ENCODE measurements at regions of chr22 and their contacts with region 1.

Region 1: GRCh38 chr22:42830166-42830565 is 26.9 kb downstream of the ARFGAP3 start:
- DNase-seq: no peak
- H3K4me3 ChIP-seq: no peak overlapping the region
- H3K27ac ChIP-seq: no peak overlapping the region
- H3K4me1 ChIP-seq: peaks cover 3% of the 10 kb centered on the region
- H3K27me3 ChIP-seq: no peaks in the 10 kb centered on the region
- CTCF ChIP-seq: no peak

Region 2: DNA sequence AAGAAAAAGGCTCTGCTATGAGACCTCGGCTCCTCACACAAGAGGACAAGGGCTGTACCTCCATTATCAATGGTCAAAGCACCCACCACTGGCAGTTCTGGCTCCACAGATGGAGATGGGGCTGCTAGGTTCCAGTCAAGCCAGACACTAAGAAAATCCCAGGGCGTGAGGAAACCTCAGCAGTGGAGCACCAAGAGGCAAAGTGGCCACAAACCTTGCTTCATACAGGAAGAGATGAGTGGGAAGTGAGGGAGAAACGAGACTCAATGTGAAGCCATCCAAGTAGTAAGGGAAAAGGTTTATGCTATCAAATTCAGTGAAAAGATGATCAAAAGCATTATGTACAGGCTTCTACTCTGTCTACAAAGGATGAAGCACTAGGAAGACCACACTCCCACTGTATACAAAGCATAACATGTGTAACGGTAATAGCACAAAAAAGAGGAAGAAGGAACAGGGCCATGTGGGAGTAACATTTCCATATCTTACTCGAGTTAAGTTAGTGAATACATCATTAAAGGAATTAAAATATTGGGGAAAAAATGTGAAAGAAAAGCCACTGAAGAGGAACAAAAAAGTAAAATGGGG is 242.5 kb before region 1 on chr22:
- CTCF ChIA-PET with region 1: no interaction called
- dilution Hi-C with region 1: no loop called
- in situ Hi-C with region 1: no loop called
- intact Hi-C with region 1: no loop called
- DNase-seq: no peak
- H3K4me3 ChIP-seq: no peak overlapping the region
- H3K27ac ChIP-seq: no peak overlapping the region
- H3K4me1 ChIP-seq: no peaks in the 10 kb centered on the region
- H3K27me3 ChIP-seq: no peaks in the 10 kb centered on the region
- CTCF ChIP-seq: no peak

Region 3: DNA sequence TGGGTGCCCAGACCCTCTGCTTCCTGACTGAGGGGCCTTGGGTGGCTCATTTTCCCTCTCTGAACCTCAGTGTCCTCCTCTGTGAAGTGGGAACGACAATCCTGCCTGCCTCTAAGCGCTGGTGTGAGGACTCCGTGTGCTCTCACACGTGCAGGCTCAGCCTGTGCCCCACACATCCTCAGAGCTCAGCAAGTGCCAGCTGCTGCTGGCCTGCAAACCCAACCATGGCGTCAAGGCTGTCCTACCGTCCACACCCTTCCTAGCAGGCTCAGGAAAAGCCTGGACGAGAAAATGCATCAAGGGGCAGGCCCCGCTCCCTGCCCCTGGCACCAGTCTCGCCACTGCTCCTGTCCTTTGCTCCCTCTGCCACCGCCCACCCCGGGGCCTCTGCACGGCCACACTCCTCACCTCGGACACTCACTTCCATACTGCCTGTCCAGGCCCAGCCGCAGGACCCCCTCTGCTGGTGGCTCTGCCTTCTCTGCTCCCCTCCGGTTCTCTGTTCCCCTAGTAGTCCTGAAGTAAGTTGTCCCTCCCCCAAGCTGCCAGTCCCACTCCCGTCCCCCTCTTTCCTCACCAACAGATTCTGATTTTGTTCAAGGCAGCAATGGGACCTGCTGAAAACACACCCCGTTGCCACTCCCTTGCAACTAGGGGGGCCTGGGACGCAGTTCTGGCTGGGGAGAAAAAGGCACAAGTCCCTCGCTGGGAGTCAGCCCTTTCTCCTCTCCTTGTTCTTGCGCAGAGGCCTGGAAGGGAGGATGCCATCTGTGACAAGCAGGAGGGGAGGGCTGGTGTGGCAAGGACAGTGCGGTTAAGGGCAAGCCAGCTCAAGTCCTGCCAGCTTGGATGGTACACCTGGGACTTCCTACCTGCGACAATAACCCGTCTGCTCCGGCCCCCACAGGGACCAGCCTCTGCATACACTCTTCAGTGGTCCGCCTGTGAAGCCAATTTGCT is 35.3 kb before region 1 on chr22:
- CTCF ChIA-PET with region 1: no interaction called
- dilution Hi-C with region 1: loop called (anchors 5 kb)
- in situ Hi-C with region 1: no loop called
- intact Hi-C with region 1: no loop called
- DNase-seq: no peak
- H3K4me3 ChIP-seq: no peak overlapping the region
- H3K27ac ChIP-seq: no peak overlapping the region
- H3K4me1 ChIP-seq: no peaks in the 10 kb centered on the region
- H3K27me3 ChIP-seq: no peaks in the 10 kb centered on the region
- CTCF ChIP-seq: no peak

Region 4: GRCh38 chr22:43053176-43053575 is 223.0 kb after region 1 on chr22:
- CTCF ChIA-PET with region 1: no interaction called
- dilution Hi-C with region 1: no loop called
- in situ Hi-C with region 1: no loop called
- intact Hi-C with region 1: no loop called
- DNase-seq: no peak
- H3K4me3 ChIP-seq: no peak overlapping the region
- H3K27ac ChIP-seq: no peak overlapping the region
- H3K4me1 ChIP-seq: no peaks in the 10 kb centered on the region
- H3K27me3 ChIP-seq: no peaks in the 10 kb centered on the region
- CTCF ChIP-seq: peak in 1 of 2 donors; percentile 18

Measured in mammary epithelial cell (primary cell).